ENCODE measurements at regions of chr6 and their contacts with region 1.

Region 1: DNA sequence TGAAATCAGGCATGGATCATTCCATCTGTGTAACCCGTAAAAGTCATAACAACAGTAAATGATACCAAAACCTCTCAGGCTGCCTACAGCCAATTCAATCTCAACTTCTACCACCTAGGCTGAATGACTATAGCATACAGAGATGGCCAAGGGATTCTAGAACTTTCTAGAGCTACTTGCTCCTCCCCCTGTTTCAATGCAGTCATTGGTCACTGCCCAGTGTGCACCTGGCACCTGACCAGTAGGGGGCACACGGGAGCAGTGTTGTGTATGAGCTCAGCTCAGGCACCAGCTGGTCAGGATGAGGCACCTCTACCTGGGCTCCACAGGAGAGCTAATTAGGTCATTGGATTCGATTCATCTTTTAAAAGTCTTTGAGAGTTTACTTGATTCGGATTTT is 86.2 kb downstream of the PLEKHG1 start:
- DNase-seq: peak in 1 of 2 donors; percentile 36
- ATAC-seq: peak in 1 of 8 donors; percentile 17
- H3K4me3 ChIP-seq: peak overlapping the region in 2 of 10 donors; percentile 57 to 59
- H3K27ac ChIP-seq: peak overlapping the region in 8 of 10 donors; percentile 43 to 94 (median 84)
- H3K4me1 ChIP-seq: peaks cover 2 to 74% (median 39%) of the 10 kb centered on the region in 9 donors
- H3K27me3 ChIP-seq: no peaks in the 10 kb centered on the region
- CTCF ChIP-seq: peak; percentile 30 to 68 (median 60)

Region 2: GRCh38 chr6:150417899-150418826 is 267.7 kb before region 1 on chr6:
- intact Hi-C with region 1: loop called in 3 of 10 experiments (anchors 5 to 10 kb)
- DNase-seq: peak in 1 of 2 donors; percentile 63
- ATAC-seq: peak in 7 of 8 donors; percentile 71 to 92 (median 88)
- H3K4me3 ChIP-seq: peak overlapping the region in 9 of 10 donors; percentile 11 to 52 (median 41)
- H3K27ac ChIP-seq: peak overlapping the region; percentile 24 to 90 (median 76)
- H3K4me1 ChIP-seq: peaks cover 0 to 30% (median 12%) of the 10 kb centered on the region in 9 donors
- H3K27me3 ChIP-seq: peaks cover 0 to 7% (median 0%) of the 10 kb centered on the region in 7 donors
- CTCF ChIP-seq: peak; percentile 59 to 91 (median 81)

Region 3: DNA sequence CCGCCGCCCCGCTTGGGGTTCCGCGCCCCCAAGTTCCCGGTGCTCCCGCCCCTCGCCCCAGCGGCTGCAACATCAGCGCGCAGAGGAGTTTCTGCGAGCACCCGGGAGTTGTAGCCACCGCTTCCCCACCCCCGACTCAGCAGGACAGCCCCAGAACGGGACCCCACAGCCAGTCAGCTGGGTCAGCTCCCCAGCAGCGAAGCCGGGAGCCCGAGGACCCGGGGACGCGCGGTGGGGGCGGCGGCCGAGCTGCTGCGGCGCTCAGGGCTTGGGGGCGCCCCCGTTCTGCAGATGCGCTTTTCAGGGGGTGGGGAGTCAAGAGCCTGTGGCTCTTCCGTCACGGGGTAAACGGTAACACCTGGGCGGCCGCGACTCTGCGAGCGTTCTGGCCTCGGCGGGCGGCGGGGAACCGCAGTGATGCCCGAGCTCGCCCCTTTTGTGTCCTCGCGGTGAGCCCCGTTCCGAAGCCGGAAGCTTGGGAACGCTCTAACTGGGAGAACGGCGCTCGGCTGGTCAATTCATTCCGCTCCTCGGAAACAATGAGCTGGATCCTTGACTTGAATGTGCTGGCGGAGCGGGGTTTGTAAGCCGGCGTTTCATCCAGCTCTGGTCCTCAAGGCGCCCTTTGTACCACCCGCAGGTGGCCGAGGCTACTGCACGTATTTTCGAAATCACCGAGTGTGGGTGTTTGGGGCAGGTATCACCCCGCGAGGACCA is 85.4 kb before region 1 on chr6:
- intact Hi-C with region 1: loop called in 2 of 10 experiments (anchors 5 kb)
- DNase-seq: peak; percentile 55 to 73
- ATAC-seq: peak; percentile 65 to 83 (median 78)
- H3K4me3 ChIP-seq: peak overlapping the region; percentile 56 to 94 (median 80)
- H3K27ac ChIP-seq: peak overlapping the region; percentile 84 to 96 (median 90)
- H3K4me1 ChIP-seq: peaks cover 0 to 25% (median 12%) of the 10 kb centered on the region in 9 donors
- H3K27me3 ChIP-seq: peaks cover 0 to 63% (median 6%) of the 10 kb centered on the region in 7 donors
- CTCF ChIP-seq: peak; percentile 19 to 64 (median 51)

Region 4: DNA sequence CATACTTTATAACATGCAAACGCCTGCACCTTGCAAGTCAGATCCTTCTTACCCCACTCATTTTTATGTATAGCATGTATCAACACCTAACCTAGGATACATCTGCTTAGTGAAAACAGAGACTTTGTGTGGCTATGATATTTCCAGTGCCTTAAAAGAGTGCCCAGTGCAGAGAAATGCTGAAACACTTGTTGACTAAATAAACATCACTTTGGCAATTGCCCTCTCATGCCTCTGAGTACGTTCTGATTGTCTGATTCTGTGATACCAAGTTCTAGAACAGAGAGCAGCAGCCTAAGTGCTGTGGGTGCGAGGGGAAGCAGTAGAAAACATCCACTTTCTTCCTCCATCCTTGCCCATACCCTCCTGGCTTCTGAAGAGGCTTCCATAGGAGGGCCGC is 72.6 kb before region 1 on chr6:
- intact Hi-C with region 1: loop called in 3 of 10 experiments (anchors 5 kb)
- DNase-seq: no peak
- ATAC-seq: no peak
- H3K4me3 ChIP-seq: no peak overlapping the region
- H3K27ac ChIP-seq: peak overlapping the region in 1 of 10 donors; percentile 68
- H3K4me1 ChIP-seq: peaks cover 0 to 72% (median 12%) of the 10 kb centered on the region in 9 donors
- H3K27me3 ChIP-seq: no peaks in the 10 kb centered on the region
- CTCF ChIP-seq: no peak

Region 5: DNA sequence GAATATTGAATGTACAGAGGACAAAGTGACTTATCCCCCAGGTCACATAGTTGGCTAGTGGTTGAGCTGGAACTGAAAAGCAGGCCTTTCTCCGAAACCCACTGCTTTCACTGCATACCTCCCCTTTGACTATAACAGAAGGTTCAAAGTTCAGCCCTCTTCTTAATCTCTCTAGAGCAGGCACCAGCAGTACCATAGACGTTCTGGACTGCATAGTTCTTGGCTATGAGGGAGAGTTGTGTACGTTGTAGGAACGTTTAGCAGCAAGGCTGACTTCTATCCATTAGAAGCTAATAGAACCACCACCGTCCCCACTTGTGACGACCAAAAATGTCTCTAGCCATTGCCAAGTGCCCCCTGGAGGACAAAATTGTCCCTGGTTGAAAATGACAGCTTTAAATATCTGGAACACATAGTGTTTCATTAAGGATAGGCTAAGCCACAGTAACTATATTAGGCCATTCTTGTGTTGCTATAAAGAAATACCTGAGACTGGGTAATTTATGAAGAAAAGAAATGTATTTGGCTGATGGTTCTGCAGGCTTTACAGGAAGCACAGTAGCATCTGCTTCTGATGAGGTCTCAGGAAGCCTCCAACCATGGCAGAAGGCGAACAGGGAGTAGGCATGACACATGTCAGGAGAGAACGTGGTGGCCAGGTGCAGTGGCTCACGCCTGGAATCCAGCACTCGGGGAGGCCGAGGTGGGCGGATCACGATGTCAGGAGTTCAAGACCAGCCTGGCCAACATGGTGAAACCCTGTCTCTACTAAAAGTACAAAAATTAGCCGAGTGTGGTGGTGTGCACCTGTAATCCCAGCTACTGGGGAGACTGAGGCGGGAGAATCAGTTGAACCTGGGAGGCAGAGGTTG is 56.0 kb after region 1 on chr6:
- intact Hi-C with region 1: loop called in 1 of 10 experiments (anchors 5 kb)
- DNase-seq: no peak
- ATAC-seq: peak in 1 of 8 donors; percentile 8
- H3K4me3 ChIP-seq: no peak overlapping the region
- H3K27ac ChIP-seq: no peak overlapping the region
- H3K4me1 ChIP-seq: peaks cover 0 to 60% (median 23%) of the 10 kb centered on the region in 9 donors
- H3K27me3 ChIP-seq: no peaks in the 10 kb centered on the region
- CTCF ChIP-seq: peak in 8 of 9 donors; percentile 16 to 58 (median 45)

Measured in heart right ventricle (tissue), 16 donors.